Right ventricle myocardium inferior (tissue), 1 donor: ENCODE measurements at regions of chr2 and their contacts with region 1.

Region 1: GRCh38 chr2:164737612-164738081 is 104.0 kb downstream of the COBLL1 start:
- DNase-seq: no peak
- ATAC-seq: peak; percentile 72

Region 2: DNA sequence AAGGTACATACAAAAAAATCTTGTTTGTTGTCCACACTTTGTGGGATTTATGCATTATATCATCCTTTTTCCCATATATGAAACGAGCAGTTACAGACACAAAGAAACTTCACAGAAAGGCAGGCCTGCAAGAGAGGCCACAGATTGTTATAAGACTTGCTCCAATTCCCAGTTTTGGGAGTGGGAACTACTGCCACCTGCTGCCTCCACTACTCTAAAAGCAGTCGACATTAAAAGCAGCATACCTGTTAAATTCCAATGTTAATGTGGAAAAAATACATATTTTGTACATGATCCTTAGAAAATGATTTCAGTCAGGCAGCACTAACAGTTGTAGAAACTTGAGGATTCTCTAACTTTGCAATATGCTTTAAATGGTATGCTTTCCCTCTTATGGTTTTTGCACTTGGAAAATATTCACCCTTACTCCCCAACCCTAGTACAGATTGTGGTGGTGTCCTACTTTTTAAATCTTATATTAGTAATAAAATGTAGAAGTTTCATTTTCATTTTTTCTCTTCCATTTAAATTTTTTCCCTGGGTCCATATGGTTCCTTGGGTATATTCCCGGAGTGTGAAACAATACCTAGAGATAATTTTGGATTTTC is 179.8 kb after region 1 on chr2:
- intact Hi-C with region 1: loop called (anchors 1 kb)
- DNase-seq: no peak
- ATAC-seq: peak; percentile 64